Adrenal gland (tissue), 19 donors: ENCODE measurements at regions of chr19 and their contacts with region 1.

Region 1: GRCh38 chr19:57978586-57979289 is 4.4 kb upstream of the C19orf18 start:
- DNase-seq: no peak
- H3K4me3 ChIP-seq: peak overlapping the region in 1 of 4 donors; percentile 21
- H3K27ac ChIP-seq: no peak overlapping the region
- H3K4me1 ChIP-seq: no peaks in the 10 kb centered on the region
- H3K27me3 ChIP-seq: no peaks in the 10 kb centered on the region
- CTCF ChIP-seq: no peak
- POLR2A ChIP-seq: no peak

Region 2: DNA sequence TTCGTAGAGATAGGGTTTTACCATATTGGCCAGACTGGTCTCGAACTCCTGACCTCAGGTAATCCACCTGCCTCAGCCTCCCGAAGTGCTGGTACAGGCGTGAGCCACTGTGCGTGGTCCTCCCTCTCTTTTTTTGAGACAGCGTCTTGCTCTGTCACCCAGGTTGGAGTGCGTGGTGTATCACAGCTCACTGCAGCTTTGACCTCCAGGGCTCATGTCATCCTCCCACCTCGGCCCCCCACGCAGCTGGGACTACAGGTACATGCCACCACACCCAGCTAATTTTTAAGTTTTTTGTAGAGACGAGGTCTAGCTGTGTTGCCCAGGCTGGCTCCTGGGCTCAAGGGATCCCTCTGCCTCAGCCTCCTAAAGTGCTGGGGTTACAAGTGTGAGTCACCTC is 101.1 kb after region 1 on chr19:
- intact Hi-C with region 1: no loop called
- DNase-seq: no peak
- H3K4me3 ChIP-seq: no peak overlapping the region
- H3K27ac ChIP-seq: no peak overlapping the region
- H3K4me1 ChIP-seq: no peaks in the 10 kb centered on the region
- H3K27me3 ChIP-seq: no peaks in the 10 kb centered on the region
- CTCF ChIP-seq: no peak
- POLR2A ChIP-seq: no peak

Region 3: DNA sequence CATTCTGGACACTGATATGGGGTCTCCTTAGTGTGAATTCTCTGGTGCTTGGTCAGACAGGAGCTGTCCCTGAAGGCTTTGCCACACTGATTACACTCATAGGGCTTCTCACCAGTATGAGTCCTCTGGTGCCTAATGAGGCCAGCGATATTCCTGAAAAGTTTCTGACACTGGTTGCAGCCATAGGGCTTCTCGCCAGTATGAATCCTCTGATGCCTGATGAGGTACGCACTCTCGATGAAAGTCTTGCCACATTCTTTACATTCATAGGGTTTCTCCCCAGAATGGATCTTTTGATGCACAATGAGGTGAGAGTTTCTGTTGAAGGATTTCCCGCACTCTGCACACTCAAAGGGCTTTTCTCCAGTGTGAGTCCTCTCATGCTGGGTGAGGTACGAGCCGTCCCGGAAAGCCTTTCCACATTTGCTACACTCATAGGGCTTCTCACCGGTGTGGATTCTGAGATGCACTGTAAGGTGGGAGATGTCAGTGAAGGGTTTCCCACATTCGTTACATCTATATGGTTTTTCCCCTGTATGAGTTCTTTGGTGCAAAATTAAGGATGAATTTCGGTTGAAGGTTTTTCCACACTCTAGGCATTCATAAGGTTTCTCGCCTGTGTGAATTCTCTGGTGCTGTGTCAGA is 149.4 kb after region 1 on chr19:
- intact Hi-C with region 1: loop called in 1 of 2 experiments (anchors 10 kb)
- DNase-seq: no peak
- H3K4me3 ChIP-seq: peak overlapping the region in 1 of 4 donors; percentile 38
- H3K27ac ChIP-seq: no peak overlapping the region
- H3K4me1 ChIP-seq: no peaks in the 10 kb centered on the region
- H3K27me3 ChIP-seq: no peaks in the 10 kb centered on the region
- CTCF ChIP-seq: no peak
- POLR2A ChIP-seq: no peak

Region 4: GRCh38 chr19:58252102-58252685 is 273.5 kb after region 1 on chr19:
- intact Hi-C with region 1: loop called in 1 of 2 experiments (anchors 10 kb)
- DNase-seq: no peak
- H3K4me3 ChIP-seq: no peak overlapping the region
- H3K27ac ChIP-seq: no peak overlapping the region
- H3K4me1 ChIP-seq: no peaks in the 10 kb centered on the region
- H3K27me3 ChIP-seq: no peaks in the 10 kb centered on the region
- CTCF ChIP-seq: no peak
- POLR2A ChIP-seq: no peak